Aorta (tissue), 5 donors: ENCODE measurements at regions of chr17 and their contacts with region 1.

Region 1: DNA sequence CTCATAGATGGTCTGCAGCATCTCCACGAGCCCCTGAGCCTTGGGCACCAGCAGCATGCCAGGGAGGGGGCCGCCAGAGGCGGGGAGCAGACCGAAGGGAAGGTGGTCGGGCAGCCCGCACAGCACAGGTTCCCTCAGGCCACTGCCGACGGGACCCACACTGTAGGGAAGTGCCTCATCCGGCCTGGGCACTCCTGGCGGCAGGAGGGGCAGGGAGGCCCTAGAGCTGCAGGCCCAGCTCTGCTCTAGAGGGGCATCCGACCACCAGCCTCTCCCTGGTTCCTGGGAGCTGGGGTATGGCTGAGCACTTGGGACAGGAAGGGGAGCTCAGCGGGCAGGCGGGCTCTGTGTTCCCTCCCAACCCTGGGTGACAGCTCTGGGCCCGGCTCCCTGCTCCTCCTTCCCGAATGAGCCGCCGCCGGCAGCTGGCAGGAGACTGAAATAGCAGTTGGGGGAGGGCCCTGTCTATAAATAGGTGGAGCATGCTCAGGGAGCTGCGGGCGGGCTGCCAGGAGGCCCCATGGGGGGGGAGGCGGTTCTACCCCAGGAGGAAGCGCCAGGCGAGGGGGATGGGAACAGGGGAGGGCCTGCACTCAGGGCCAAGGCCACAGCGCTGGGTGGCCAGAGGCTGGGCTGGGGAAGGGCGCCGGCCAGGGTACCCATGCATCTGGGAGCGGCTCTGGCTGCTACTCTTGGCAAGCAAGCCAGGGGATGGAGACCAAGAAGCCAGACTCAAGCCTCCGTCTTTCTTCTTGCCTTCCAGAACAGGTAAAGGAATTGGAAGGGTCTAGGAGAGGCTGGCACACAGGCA is 12.4 kb downstream of the HDAC5 start:
- DNase-seq: peak; percentile 99 to 100
- ATAC-seq: peak; percentile 89
- H3K4me3 ChIP-seq: peak overlapping the region; percentile 2 to 61
- H3K27ac ChIP-seq: peak overlapping the region; percentile 36 to 90
- H3K4me1 ChIP-seq: peaks cover 4 to 6% of the 10 kb centered on the region in 2 donors
- H3K27me3 ChIP-seq: no peaks in the 10 kb centered on the region

Region 2: GRCh38 chr17:44006598-44007345 is 104.3 kb before region 1 on chr17:
- intact Hi-C with region 1: no loop called
- DNase-seq: peak; percentile 99 to 100
- ATAC-seq: peak; percentile 94
- H3K4me3 ChIP-seq: peak overlapping the region; percentile 55 to 58
- H3K27ac ChIP-seq: no peak overlapping the region
- H3K4me1 ChIP-seq: no peaks in the 10 kb centered on the region
- H3K27me3 ChIP-seq: peaks cover 0 to 2% of the 10 kb centered on the region in 2 donors

Region 3: DNA sequence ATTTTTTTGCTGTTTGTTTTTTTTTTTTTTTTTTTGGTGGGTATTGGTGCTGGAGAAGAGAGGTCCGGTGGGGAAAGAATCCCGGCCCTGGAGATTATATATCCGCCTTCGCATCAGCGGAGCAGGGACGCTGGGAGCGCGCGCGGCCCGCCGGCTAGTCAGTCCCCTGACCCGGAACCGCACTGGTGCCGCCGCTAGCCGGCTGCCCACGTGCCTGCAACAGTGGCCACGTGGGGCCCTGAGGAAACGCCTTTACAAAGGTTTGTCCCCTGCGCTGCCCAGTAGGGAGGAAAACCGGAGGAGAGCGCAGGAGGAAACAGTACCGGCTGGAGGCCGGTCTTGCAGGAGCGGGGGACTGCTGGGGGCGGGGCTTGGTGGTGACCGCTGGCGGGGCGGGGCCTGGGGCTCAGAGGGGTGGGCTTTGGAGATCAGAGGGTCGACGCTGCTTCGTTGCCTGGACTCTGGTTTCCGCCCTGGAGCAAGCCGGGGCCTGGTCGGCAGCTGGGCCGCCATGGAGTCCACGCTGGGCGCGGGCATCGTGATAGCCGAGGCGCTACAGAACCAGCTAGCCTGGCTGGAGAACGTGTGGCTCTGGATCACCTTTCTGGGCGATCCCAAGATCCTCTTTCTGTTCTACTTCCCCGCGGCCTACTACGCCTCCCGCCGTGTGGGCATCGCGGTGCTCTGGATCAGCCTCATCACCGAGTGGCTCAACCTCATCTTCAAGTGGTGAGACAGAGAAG is 40.4 kb before region 1 on chr17 and contains the start of gene G6PC3:
- intact Hi-C with region 1: loop called (anchors 2 to 5 kb)
- DNase-seq: peak; percentile 97
- ATAC-seq: peak; percentile 96
- H3K4me3 ChIP-seq: peak within 1 kb of the TSS; percentile 38 to 44
- H3K27ac ChIP-seq: peak within 1 kb of the TSS in 1 of 2 donors; percentile 54
- H3K4me1 ChIP-seq: no peaks in the 10 kb centered on the region
- H3K27me3 ChIP-seq: no peaks in the 10 kb centered on the region
- total RNA-seq, gene G6PC3: 30.3 to 32.5 TPM